Prostate gland (tissue), 2 donors: ENCODE measurements at regions of chr6 and their contacts with region 1.

Region 1: DNA sequence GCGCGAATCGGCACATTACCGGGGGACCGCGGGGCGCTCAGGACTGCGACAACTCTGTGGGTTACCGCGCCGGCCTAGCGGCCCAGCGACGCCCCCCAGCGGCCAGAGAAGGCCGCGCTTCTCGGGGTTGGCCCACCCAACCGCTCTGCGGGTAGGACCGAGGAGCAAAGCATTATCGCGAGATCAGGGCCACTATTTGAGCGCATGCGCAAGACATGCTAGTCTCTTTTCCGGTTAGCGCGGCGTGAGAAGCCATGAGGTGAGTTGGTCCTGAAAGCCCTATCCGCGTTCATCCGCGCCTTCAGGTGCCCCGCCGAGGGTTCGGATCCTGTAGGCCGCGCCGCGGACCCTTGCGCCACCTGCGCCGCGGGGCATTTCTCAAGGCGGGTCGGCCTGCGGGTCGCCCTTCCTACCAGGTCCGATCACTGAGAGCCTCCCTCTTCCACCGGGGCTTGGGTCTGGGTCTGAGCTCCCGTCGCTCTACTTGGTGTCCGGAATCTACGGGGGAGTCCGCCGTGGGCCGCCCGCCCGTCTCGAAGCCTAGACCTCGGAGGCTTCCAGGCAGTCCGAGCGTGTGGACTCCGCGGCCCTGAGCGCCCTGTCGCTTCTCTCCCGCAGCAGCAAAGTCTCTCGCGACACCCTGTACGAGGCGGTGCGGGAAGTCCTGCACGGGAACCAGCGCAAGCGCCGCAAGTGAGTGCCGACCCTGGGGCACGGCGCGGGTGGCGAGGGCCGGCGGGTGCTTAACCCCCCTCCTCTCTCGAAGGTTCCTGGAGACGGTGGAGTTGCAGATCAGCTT is at the start of gene RPL10A:
- DNase-seq: peak; percentile 97
- H3K4me3 ChIP-seq: peak within 1 kb of the TSS; percentile 77 to 81
- H3K27ac ChIP-seq: peak within 1 kb of the TSS; percentile 90 to 93
- H3K4me1 ChIP-seq: no peaks in the 10 kb centered on the region
- H3K27me3 ChIP-seq: no peaks in the 10 kb centered on the region
- CTCF ChIP-seq: peak; percentile 94 to 100 (median 97)
- POLR2A ChIP-seq: peak; percentile 94
- total RNA-seq, gene RPL10A: 897 to 2,172 TPM

Region 2: DNA sequence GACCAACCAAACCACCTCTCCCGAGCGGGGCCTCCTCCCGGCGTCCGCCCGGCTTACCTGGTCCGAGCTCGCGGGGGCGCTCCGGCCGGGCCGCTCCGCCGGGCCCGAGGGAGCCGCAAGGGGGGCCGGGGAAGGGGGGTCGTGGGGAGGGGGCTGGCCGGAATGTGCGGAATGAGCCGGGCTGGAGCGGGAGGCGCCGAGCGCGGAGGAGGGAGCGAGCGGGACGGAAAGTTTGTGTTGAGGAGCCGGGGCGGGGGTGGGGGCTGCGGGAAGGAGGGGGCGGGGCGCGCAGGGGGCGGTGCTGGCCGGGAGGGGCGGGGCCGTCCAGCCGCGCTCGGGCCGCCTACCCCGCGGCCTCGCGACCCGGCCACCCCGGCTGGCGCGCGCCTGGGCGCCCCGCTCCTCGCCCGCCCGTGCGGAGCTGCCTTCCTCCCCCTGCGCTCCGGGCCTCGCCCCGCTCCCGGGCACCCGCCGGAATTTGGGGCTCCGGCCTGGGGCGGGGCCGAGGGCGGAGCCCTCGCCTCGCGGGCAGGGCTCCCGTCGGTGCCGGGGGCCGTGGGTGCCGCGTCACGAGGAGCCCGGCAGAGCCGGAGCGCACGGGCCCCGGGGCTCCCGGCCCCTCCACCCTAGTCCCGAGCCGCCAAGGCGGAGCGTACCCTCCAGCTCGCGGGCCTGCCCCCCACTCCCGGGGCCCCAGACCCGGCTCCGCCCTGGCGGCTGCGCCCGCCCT is 28.6 kb after region 1 on chr6 and contains the start of gene TEAD3:
- intact Hi-C with region 1: loop called (anchors 2 kb)
- DNase-seq: peak; percentile 68
- H3K4me3 ChIP-seq: peak within 1 kb of the TSS; percentile 89 to 97
- H3K27ac ChIP-seq: peak within 1 kb of the TSS; percentile 95 to 98
- H3K4me1 ChIP-seq: peaks cover 29% of the 10 kb centered on the region
- H3K27me3 ChIP-seq: no peaks in the 10 kb centered on the region
- CTCF ChIP-seq: no peak
- POLR2A ChIP-seq: peak; percentile 76
- total RNA-seq, gene TEAD3: 34.1 to 41.1 TPM